ENCODE measurements at regions of chr11 and their contacts with region 1.

Region 1: GRCh38 chr11:87352759-87353707 is 315.3 kb downstream of the TMEM135 start:
- DNase-seq: peak; percentile 61 to 99
- H3K4me3 ChIP-seq: no peak overlapping the region
- H3K27ac ChIP-seq: no peak overlapping the region
- H3K4me1 ChIP-seq: no peaks in the 10 kb centered on the region
- H3K27me3 ChIP-seq: no peaks in the 10 kb centered on the region
- CTCF ChIP-seq: peak; percentile 86 to 98 (median 95)
- EP300 ChIP-seq: no peak
- POLR2A ChIP-seq: no peak
- RAD21 ChIP-seq: peak; percentile 99

Region 2: DNA sequence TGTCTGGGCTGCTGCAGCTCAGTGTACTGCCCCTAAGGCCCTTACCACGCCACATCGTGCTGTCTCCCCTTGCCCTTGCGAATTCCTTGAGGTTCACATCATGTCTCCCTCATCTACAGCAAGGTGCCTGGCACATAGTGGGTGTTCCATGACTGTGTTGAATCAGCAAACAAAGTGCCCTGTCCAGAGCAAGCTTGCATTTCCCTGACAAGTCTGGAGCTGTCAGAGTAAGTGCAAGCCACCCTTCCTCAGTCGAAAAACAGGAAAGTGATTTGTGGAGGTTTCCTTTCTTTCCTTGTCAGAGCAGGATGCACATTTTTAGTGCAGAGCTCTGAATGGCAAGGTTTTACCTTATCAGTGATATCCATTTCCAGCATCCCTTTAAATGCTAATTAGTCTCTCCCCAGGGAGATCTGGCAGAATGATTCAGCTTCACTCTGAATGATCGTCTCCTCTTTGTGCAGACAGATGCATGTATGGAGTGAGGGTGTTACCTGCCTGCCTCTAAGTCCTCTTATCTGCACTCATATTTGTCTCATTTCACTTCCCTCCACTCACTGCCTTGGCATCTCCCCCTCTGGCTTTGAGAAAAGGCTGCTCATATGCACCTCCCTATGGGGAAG is 15.9 kb after region 1 on chr11:
- CTCF ChIA-PET with region 1: interaction called, 16 read pairs
- POLR2A ChIA-PET with region 1: no interaction called
- DNase-seq: peak in 1 of 2 experiments; percentile 13
- H3K4me3 ChIP-seq: no peak overlapping the region
- H3K27ac ChIP-seq: no peak overlapping the region
- H3K4me1 ChIP-seq: peaks cover 6 to 14% (median 9%) of the 10 kb centered on the region in 4 experiments; a peak in 5 of 7 replicates
- H3K27me3 ChIP-seq: no peaks in the 10 kb centered on the region
- CTCF ChIP-seq: no peak
- EP300 ChIP-seq: no peak
- POLR2A ChIP-seq: no peak
- RAD21 ChIP-seq: no peak

Region 3: GRCh38 chr11:87392652-87393051 is 39.6 kb after region 1 on chr11:
- CTCF ChIA-PET with region 1: no interaction called
- POLR2A ChIA-PET with region 1: no interaction called
- DNase-seq: no peak
- H3K4me3 ChIP-seq: no peak overlapping the region
- H3K27ac ChIP-seq: no peak overlapping the region
- H3K4me1 ChIP-seq: no peaks in the 10 kb centered on the region
- H3K27me3 ChIP-seq: no peaks in the 10 kb centered on the region
- CTCF ChIP-seq: no peak
- EP300 ChIP-seq: no peak
- POLR2A ChIP-seq: no peak
- RAD21 ChIP-seq: no peak

Region 4: GRCh38 chr11:87432022-87432421 is 79.0 kb after region 1 on chr11:
- CTCF ChIA-PET with region 1: interaction called, 10 read pairs
- POLR2A ChIA-PET with region 1: no interaction called
- DNase-seq: no peak
- H3K4me3 ChIP-seq: no peak overlapping the region
- H3K27ac ChIP-seq: no peak overlapping the region
- H3K4me1 ChIP-seq: no peaks in the 10 kb centered on the region
- H3K27me3 ChIP-seq: no peaks in the 10 kb centered on the region
- CTCF ChIP-seq: no peak
- EP300 ChIP-seq: no peak
- POLR2A ChIP-seq: no peak
- RAD21 ChIP-seq: no peak